ENCODE measurements at regions of chr7 and their contacts with region 1.

Region 1: DNA sequence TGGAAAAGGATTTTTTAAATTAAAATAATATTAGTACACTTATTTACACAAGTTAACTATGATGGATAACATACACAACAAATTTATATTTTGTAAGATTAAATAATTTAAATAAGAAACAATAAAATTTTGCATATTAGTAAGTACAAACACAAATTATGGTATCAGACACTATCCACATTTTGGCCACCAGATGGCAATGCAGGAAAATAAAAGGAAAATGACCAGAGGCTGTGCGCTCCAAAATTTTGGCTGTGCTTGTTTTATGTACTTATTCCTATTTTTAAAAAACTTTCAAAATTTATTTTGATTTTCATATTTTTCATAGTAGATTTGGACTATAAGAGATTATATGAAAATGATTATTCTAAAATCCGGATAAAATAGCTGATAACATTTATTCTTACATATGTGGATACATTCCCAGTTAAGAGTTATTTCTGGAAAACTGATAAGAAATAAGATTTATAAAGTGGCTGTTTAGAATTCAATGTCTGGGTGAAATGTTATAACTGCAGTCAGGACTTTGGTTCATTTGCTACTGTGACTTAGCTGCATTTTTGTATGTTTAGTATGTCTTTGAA is 274.7 kb upstream of the HGF start:
- DNase-seq: no peak
- H3K4me3 Mint-ChIP-seq: no peak overlapping the region
- H3K27ac Mint-ChIP-seq: no peak overlapping the region
- H3K4me1 Mint-ChIP-seq: no peaks in the 10 kb centered on the region
- H3K27me3 Mint-ChIP-seq: no peaks in the 10 kb centered on the region

Region 2: DNA sequence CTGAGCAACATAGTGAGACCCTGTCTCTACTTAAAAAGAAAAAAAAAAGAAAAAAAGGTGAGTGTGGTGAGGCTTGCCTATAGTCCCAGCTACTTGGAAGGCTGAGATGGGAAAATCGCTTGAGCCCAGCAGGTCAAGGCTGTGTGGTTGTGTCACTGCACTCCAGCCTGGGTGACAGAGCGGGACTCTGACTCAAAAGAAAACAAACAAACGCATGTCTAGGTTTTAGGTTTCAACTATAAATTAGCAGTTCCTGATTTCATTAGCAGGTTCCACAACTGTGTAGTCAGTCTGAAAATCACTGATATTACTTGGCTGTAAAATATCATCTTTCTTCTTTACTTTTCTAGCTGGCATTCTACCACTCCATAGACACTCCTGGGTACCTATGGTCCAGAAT is 119.1 kb before region 1 on chr7:
- CTCF ChIA-PET with region 1: no interaction called
- POLR2A ChIA-PET with region 1: no interaction called
- intact Hi-C with region 1: no loop called
- DNase-seq: no peak
- H3K4me3 Mint-ChIP-seq: no peak overlapping the region
- H3K27ac Mint-ChIP-seq: no peak overlapping the region
- H3K4me1 Mint-ChIP-seq: no peaks in the 10 kb centered on the region
- H3K27me3 Mint-ChIP-seq: no peaks in the 10 kb centered on the region

Region 3: DNA sequence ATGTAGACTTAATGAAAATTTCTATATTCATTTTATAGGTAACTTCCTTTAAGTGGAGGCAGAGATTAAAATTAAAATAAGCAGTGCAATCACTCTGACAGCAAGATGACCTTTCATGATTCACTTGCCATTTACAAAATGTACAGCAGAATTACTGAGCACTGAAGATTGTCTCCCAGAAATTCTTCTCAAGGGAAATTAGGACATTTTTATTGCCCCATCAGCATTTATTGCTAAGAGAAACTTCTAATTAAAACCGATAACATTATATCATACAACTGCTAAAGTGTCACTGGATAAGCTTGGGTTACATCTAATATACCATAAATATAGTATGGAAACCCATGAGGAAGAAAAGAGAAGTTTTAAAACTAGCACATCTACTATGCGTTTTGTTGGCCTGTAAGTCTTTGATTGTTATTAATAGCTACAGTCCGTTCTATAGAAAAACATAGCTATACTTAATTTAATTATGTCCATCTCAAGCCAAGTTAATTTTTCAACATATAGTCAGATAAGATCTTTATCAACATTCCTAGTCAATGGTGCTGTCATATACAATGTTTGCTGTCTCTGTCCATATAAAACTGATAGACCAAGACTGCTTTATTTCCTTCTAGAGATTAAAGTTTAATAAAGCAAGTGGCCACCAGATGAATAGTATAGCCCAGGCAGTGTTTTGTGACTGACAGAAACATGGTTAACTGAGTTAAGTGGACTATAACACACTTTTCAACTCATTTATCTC is 57.7 kb before region 1 on chr7:
- CTCF ChIA-PET with region 1: no interaction called
- POLR2A ChIA-PET with region 1: no interaction called
- intact Hi-C with region 1: loop called (anchors 10 kb)
- DNase-seq: no peak
- H3K4me3 Mint-ChIP-seq: no peak overlapping the region
- H3K27ac Mint-ChIP-seq: no peak overlapping the region
- H3K4me1 Mint-ChIP-seq: no peaks in the 10 kb centered on the region
- H3K27me3 Mint-ChIP-seq: no peaks in the 10 kb centered on the region

Region 4: GRCh38 chr7:82572195-82572880 is 527.7 kb after region 1 on chr7:
- CTCF ChIA-PET with region 1: interaction called, 4 read pairs
- POLR2A ChIA-PET with region 1: no interaction called
- intact Hi-C with region 1: loop called (anchors 1 kb)
- DNase-seq: peak; percentile 72
- H3K4me3 Mint-ChIP-seq: no peak overlapping the region
- H3K27ac Mint-ChIP-seq: no peak overlapping the region
- H3K4me1 Mint-ChIP-seq: no peaks in the 10 kb centered on the region
- H3K27me3 Mint-ChIP-seq: no peaks in the 10 kb centered on the region

Region 5: GRCh38 chr7:82605247-82605872 is 560.8 kb after region 1 on chr7:
- CTCF ChIA-PET with region 1: interaction called, 6 read pairs
- POLR2A ChIA-PET with region 1: no interaction called
- intact Hi-C with region 1: loop called (anchors 10 kb)
- DNase-seq: no peak
- H3K4me3 Mint-ChIP-seq: no peak overlapping the region
- H3K27ac Mint-ChIP-seq: no peak overlapping the region
- H3K4me1 Mint-ChIP-seq: no peaks in the 10 kb centered on the region
- H3K27me3 Mint-ChIP-seq: no peaks in the 10 kb centered on the region

Region 6: GRCh38 chr7:82729172-82730030 is 684.8 kb after region 1 on chr7:
- CTCF ChIA-PET with region 1: no interaction called
- POLR2A ChIA-PET with region 1: no interaction called
- intact Hi-C with region 1: loop called (anchors 5 kb)
- DNase-seq: no peak
- H3K4me3 Mint-ChIP-seq: no peak overlapping the region
- H3K27ac Mint-ChIP-seq: no peak overlapping the region
- H3K4me1 Mint-ChIP-seq: no peaks in the 10 kb centered on the region
- H3K27me3 Mint-ChIP-seq: no peaks in the 10 kb centered on the region

Measured in activated CD4-positive, alpha-beta memory T cell treated with anti-CD3 and anti-CD28 coated beads for 36 hours (primary cell).